Colonic mucosa (tissue), 4 donors: ENCODE measurements at regions of chr14 and their contacts with region 1.

Region 1: DNA sequence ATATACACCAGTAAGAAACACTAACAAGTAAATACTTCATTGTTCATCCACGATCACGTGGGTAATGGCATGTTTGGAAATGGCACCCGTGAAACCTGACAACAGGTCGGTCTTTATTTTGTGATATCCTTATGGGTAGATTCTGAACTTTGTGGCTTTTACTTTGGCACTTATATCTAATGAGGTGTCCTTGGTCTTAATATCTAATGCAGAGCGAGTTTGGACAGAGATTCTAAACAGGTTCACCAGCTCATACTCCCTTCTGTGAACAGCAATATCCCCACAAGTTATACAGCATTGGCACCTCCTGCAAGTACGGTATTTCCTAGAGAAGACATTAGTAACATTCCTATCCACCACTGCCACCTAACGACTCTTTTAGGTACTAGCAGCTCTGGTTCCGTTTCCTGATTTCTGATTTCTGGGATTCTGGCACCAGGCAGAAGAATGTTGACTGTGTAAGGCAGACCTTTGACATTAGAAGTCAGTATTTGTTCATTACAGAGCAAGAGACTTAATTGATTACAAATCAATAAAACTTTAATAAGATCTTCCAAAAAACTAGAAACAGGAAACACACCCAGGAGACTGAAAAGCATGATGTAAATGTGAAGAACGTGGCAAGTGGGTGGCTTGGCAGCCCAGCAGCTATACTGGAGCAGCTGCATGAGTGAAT is 2.4 kb downstream of the ANG start:
- DNase-seq: peak; percentile 75
- H3K4me3 ChIP-seq: no peak overlapping the region
- H3K27ac ChIP-seq: no peak overlapping the region
- H3K4me1 ChIP-seq: peaks cover 4% of the 10 kb centered on the region
- H3K27me3 ChIP-seq: no peaks in the 10 kb centered on the region
- CTCF ChIP-seq: peak; percentile 88

Region 2: DNA sequence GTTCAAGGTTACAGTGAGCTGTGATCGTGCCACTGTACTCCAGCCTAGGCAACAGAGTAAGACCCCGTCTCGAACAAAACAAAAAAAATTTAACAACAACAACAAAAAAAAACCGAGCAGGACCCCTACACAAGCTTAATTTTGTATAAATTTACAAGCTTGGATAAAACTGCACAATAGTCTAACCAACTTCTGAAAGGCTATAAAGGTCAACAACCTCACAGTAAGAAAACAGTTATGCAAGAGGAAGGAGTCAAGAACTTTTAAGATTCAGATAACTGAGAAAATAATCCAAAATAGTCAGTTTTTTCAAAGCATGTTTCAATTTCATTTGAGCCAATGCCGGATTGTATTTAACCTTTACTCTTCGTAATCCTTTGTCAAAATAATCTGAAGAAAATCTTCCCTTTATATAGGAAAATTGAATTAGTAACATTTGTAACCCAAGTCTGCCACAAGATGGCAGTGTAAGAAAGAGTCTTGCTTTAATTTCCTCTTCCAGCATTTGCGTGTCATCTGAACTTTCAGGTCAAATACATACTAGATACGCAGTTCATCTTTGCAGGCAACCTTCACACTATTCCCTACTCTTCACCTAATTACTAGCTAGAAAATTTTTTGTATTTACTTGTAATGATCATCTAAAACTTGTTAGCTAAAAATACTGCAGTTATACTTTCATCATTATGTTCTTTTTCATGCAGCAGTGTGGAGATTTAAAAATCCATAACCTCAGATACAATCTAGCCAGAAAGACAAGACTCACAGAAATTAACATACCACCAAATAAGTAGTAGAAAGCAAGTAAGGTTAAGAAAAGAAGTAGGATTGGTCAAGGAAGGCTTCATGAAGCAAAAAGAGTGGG is 363.7 kb before region 1 on chr14:
- intact Hi-C with region 1: loop called (anchors 5 kb)
- DNase-seq: peak; percentile 33
- H3K4me3 ChIP-seq: no peak overlapping the region
- H3K27ac ChIP-seq: no peak overlapping the region
- H3K4me1 ChIP-seq: no peaks in the 10 kb centered on the region
- H3K27me3 ChIP-seq: no peaks in the 10 kb centered on the region
- CTCF ChIP-seq: peak; percentile 72

Region 3: DNA sequence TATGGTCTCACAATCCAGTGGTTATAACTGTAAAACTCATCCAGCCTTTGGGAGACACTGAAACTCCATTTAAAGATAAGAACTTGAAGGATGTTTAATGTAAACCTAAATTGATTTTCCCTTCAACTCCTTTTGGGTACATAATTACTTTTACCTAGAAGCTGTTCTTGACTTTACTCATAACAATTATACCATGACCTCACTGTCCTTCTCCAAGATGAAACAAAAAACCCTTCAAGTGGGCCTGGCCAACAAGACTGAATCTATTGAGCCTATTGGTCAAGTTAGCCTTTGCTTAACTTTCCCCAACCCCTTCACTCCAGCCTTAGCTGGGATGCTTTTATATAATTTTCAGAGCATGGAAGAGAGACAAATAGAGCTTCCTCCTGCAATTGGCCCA is 325.1 kb before region 1 on chr14:
- intact Hi-C with region 1: no loop called
- DNase-seq: no peak
- H3K4me3 ChIP-seq: no peak overlapping the region
- H3K27ac ChIP-seq: no peak overlapping the region
- H3K4me1 ChIP-seq: no peaks in the 10 kb centered on the region
- H3K27me3 ChIP-seq: no peaks in the 10 kb centered on the region
- CTCF ChIP-seq: no peak

Region 4: DNA sequence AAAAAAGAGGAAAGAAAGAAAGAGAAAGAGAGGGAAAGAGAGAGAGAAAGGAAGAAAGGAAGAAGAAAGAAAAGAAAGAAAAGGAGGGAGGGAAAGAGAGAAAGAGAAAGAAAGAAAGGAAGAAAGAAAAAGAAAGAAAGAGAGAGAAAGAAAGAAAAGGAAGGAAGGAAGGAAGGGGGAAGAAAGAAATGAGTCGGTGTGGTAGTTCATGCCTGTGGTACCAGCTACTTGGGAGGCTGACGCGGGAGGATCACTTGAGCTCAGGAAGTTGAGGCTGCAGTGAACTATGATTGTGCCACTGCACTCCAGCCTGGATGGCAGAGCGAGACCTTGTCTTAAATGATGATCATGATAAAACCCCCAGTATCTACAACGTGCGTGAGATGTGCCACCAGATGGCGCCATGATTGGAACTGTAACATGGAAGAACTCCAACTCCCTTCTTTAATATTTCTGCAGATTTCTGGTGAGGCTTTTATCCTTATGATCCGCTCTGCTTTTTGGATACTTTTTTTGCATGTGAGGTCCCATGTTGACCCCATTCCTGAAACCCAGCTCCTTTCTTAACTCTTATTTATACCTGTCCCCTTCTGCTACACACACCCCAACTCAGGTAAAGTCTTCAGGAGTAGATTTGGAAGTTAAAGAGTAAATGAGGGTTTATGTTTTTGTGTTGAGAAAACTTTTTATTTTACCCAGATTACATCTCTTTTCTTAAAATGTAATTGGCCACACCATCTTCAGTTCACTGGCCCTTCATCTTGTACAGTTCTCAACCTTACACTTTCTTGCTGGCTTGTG is 160.0 kb before region 1 on chr14:
- intact Hi-C with region 1: loop called (anchors 10 kb)
- DNase-seq: peak; percentile 75
- H3K4me3 ChIP-seq: no peak overlapping the region
- H3K27ac ChIP-seq: no peak overlapping the region
- H3K4me1 ChIP-seq: no peaks in the 10 kb centered on the region
- H3K27me3 ChIP-seq: no peaks in the 10 kb centered on the region
- CTCF ChIP-seq: peak; percentile 63

Region 5: GRCh38 chr14:20657216-20658128 is 33.5 kb before region 1 on chr14:
- intact Hi-C with region 1: loop called (anchors 5 kb)
- DNase-seq: no peak
- H3K4me3 ChIP-seq: no peak overlapping the region
- H3K27ac ChIP-seq: no peak overlapping the region
- H3K4me1 ChIP-seq: no peaks in the 10 kb centered on the region
- H3K27me3 ChIP-seq: peaks cover 22% of the 10 kb centered on the region
- CTCF ChIP-seq: no peak

Region 6: GRCh38 chr14:20970983-20971704 is 280.2 kb after region 1 on chr14:
- intact Hi-C with region 1: loop called (anchors 10 kb)
- DNase-seq: peak; percentile 82
- H3K4me3 ChIP-seq: peak overlapping the region; percentile 50
- H3K27ac ChIP-seq: peak overlapping the region; percentile 34
- H3K4me1 ChIP-seq: peaks cover 3% of the 10 kb centered on the region
- H3K27me3 ChIP-seq: no peaks in the 10 kb centered on the region
- CTCF ChIP-seq: peak; percentile 74